Prostate gland (tissue), 2 donors: ENCODE measurements at regions of chr1 and their contacts with region 1.

Region 1: DNA sequence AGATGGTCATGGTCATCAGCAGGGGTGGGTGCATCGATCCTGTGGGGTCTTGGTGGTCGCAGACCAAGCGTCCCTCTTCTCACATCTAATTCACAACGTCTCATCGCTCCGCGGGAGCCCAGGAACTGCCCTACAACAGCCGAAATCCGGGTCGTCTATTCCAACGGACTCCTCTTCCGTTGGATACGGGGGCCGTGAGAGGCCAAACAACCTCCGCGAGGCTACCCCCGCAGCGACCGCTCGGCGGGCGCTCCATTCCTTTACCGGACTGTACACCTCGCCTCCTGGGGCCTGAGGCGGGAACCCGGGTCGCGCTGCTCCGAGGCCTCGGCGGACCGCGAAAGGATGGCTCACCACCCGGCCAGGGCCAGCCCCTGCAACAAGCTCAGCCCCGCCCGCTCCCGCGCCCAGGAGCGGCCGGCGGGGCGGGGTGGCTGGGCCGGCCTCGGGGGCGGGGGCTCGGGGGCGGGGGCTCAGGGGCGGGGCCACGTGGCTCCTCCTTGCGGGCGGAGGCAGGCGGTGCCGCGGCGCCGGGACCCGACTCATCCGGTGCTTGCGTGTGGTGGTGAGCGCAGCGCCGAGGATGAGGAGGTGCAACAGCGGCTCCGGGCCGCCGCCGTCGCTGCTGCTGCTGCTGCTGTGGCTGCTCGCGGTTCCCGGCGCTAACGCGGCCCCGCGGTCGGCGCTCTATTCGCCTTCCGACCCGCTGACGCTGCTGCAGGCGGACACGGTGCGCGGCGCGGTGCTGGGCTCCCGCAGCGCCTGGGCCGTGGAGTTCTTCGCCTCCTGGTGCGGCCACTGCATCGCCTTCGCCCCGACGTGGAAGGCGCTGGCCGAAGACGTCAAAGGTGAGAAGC is at the start of gene QSOX1:
- DNase-seq: peak; percentile 84
- H3K4me3 ChIP-seq: peak within 1 kb of the TSS; percentile 83 to 90
- H3K27ac ChIP-seq: peak within 1 kb of the TSS; percentile 79 to 87
- H3K4me1 ChIP-seq: peaks cover 6% of the 10 kb centered on the region
- H3K27me3 ChIP-seq: no peaks in the 10 kb centered on the region
- CTCF ChIP-seq: peak in 3 of 4 experiments; percentile 40 to 63 (median 42)
- POLR2A ChIP-seq: peak; percentile 95
- total RNA-seq, gene QSOX1: 77.3 to 471 TPM

Region 2: DNA sequence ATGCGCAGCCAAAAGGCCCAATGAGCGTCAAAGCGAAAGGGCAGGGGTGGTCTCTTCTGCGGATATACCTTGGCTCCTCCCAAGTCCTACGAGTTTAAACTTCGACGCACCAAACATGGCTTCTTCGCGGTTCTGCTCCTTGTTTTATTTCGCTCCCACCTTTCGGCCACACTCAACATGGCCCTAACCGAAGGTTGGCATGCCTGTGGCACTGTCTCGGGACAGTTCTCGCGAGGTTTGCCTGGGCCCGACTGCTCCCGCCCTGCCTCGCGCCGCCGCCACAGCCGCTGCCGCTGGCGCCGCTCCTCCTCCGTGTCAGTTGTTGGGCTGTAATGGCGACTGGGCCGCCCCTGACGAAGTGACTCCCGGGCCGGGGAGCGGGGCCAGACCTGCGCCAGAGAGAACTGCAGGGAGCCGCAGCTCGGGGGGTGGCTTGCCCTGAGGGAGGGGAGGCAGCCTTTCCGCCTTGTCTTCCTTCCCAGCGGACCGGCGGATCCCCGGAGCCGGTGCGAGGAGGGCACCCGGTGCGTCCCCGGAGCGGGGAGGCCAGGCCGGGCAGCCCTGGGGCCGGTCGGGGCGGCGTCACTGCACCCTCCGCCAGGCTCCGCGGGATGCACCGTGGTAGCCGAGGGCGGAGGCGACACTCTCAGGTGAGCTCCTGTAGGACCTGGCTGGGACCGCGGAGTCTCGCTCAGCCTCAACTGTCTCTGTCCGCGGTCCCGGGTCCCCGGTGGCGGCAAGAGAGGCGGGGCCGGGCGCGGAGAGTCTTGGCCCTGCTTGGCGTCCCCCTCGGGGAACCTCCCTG is 199.9 kb before region 1 on chr1 and contains the start of gene CEP350:
- intact Hi-C with region 1: loop called (anchors 10 kb)
- DNase-seq: peak; percentile 98
- H3K4me3 ChIP-seq: peak within 1 kb of the TSS; percentile 91 to 95
- H3K27ac ChIP-seq: peak within 1 kb of the TSS; percentile 93 to 96
- H3K4me1 ChIP-seq: no peaks in the 10 kb centered on the region
- H3K27me3 ChIP-seq: no peaks in the 10 kb centered on the region
- CTCF ChIP-seq: peak in 2 of 4 experiments; percentile 11 to 36
- POLR2A ChIP-seq: peak; percentile 85
- total RNA-seq, gene CEP350: 43.3 to 67.4 TPM

Region 3: DNA sequence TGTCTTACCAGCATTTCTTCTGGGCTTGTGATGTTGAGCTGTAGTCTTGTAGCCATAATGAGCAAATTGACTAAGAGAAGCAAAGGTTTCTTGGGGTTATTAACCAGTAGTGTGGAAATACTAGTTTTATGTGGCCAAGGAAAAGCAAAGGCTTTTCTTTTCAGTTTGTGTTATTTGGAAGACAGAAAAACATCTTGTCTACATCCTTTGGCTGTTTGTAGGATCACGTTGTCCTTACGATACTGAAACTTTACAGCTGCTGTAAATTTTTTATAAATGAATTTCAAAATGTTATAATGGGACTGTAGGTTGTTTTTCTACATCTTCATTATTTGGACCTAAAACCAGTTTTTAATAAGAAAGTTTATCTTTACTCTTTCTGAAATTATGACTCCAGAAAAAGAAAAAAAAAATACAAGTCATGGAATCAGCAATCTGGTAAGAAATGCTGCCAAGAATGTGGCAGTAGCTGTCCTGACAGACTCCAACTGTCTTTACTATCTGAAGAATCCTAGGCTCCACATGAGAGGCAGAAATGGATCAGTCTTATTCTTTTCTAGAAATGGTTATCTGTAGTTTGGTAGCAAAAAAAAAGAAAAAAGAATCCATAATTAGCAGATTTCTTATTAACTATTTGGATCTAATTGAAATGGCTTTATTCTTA is 41.4 kb before region 1 on chr1:
- intact Hi-C with region 1: loop called (anchors 5 kb)
- DNase-seq: no peak
- H3K4me3 ChIP-seq: no peak overlapping the region
- H3K27ac ChIP-seq: no peak overlapping the region
- H3K4me1 ChIP-seq: no peaks in the 10 kb centered on the region
- H3K27me3 ChIP-seq: no peaks in the 10 kb centered on the region
- CTCF ChIP-seq: no peak
- POLR2A ChIP-seq: no peak

Region 4: GRCh38 chr1:180123463-180123936 is 31.1 kb before region 1 on chr1:
- intact Hi-C with region 1: no loop called
- DNase-seq: no peak
- H3K4me3 ChIP-seq: no peak overlapping the region
- H3K27ac ChIP-seq: no peak overlapping the region
- H3K4me1 ChIP-seq: no peaks in the 10 kb centered on the region
- H3K27me3 ChIP-seq: no peaks in the 10 kb centered on the region
- CTCF ChIP-seq: no peak
- POLR2A ChIP-seq: no peak

Region 5: GRCh38 chr1:181356505-181357340 is 1202.2 kb after region 1 on chr1:
- intact Hi-C with region 1: no loop called
- DNase-seq: no peak
- H3K4me3 ChIP-seq: no peak overlapping the region
- H3K27ac ChIP-seq: no peak overlapping the region
- H3K4me1 ChIP-seq: no peaks in the 10 kb centered on the region
- H3K27me3 ChIP-seq: no peaks in the 10 kb centered on the region
- CTCF ChIP-seq: no peak
- POLR2A ChIP-seq: no peak